Heart right ventricle (tissue), 16 donors: ENCODE measurements at regions of chr2 and their contacts with region 1.

Region 1: GRCh38 chr2:118882709-118883210 is 35.3 kb upstream of the EN1 start:
- DNase-seq: peak; percentile 28 to 40
- ATAC-seq: peak; percentile 51 to 92 (median 78)
- H3K4me3 ChIP-seq: peak overlapping the region in 4 of 10 donors; percentile 17 to 37 (median 29)
- H3K27ac ChIP-seq: no peak overlapping the region
- H3K4me1 ChIP-seq: peaks cover 0 to 15% (median 0%) of the 10 kb centered on the region in 9 donors
- H3K27me3 ChIP-seq: peaks cover 0 to 52% (median 45%) of the 10 kb centered on the region in 7 donors
- CTCF ChIP-seq: peak; percentile 49 to 93 (median 80)

Region 2: DNA sequence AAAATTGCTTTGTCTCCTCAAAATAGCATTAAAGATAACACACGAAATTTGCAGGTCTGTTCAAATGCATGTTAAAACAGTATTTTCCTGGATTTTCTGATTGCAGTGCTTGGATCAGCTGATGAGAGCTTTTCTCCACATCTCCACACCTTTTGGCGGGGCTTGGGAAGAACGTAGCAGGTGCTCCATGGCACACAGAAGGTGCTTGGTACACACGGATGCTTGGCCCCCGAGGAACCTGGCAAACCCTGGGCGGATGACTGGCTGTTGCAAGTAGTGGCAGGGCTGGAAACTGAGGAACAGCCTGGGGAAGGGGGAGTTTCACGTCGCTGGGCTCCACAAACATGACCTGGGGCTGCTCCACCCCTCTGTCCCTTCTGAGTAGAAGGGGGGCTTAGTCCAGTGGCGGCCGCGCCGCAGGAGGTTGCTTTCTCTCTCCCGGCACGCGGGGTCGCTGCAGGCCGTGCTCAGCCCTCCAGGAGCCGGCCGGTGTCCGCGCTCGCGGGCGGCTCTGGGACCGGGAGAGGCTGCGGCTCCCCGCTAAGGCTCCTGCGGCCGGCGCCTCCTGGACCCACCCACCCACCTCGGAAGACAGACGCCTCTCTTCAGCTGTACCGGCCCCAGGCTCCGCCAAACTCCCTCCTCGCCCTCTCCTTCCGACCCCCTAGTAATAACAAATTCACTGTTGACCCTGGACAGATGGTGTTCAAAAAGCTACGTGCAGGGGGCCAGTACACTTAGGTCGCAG is 128.6 kb after region 1 on chr2:
- intact Hi-C with region 1: loop called in 1 of 10 experiments (anchors 5 kb)
- DNase-seq: peak; percentile 22 to 65
- ATAC-seq: peak; percentile 79 to 95 (median 92)
- H3K4me3 ChIP-seq: peak overlapping the region in 2 of 10 donors; percentile 15 to 20
- H3K27ac ChIP-seq: no peak overlapping the region
- H3K4me1 ChIP-seq: peaks cover 0 to 7% (median 0%) of the 10 kb centered on the region in 9 donors
- H3K27me3 ChIP-seq: peaks cover 0 to 48% (median 34%) of the 10 kb centered on the region in 7 donors
- CTCF ChIP-seq: peak; percentile 21 to 77 (median 65)

Region 3: DNA sequence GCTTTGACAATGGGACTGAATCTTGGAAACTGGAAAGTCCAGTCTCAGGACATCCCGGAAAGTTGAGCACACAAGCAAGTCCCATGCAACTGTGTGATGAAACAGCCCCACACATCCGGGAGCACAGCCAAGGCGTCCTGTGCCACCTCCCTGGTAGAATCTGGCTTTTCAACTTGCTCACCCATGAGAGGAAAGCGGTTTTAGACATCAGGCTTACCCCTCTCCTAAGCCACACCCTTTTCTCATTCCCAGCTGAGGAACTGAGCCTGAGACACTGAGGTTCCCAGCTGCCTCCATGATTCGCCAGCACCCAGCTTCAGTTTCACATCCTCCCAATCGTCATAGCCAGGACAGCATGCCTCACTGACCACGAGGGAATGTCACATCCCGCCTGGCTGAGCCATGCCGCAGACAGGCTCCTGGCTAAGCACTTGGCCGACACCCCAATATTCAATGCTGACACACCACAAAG is 401.1 kb after region 1 on chr2:
- intact Hi-C with region 1: loop called in 2 of 10 experiments (anchors 10 kb)
- DNase-seq: peak; percentile 46 to 60
- ATAC-seq: peak; percentile 77 to 91 (median 84)
- H3K4me3 ChIP-seq: no peak overlapping the region
- H3K27ac ChIP-seq: peak overlapping the region in 6 of 10 donors; percentile 9 to 80 (median 23)
- H3K4me1 ChIP-seq: peaks cover 0 to 28% (median 3%) of the 10 kb centered on the region in 9 donors
- H3K27me3 ChIP-seq: no peaks in the 10 kb centered on the region
- CTCF ChIP-seq: no peak

Region 4: GRCh38 chr2:119311356-119311755 is 428.6 kb after region 1 on chr2:
- intact Hi-C with region 1: loop called in 1 of 10 experiments (anchors 5 kb)
- DNase-seq: no peak
- ATAC-seq: peak in 1 of 8 donors; percentile 6
- H3K4me3 ChIP-seq: no peak overlapping the region
- H3K27ac ChIP-seq: no peak overlapping the region
- H3K4me1 ChIP-seq: peaks cover 0 to 34% (median 16%) of the 10 kb centered on the region in 9 donors
- H3K27me3 ChIP-seq: no peaks in the 10 kb centered on the region
- CTCF ChIP-seq: no peak

Region 5: DNA sequence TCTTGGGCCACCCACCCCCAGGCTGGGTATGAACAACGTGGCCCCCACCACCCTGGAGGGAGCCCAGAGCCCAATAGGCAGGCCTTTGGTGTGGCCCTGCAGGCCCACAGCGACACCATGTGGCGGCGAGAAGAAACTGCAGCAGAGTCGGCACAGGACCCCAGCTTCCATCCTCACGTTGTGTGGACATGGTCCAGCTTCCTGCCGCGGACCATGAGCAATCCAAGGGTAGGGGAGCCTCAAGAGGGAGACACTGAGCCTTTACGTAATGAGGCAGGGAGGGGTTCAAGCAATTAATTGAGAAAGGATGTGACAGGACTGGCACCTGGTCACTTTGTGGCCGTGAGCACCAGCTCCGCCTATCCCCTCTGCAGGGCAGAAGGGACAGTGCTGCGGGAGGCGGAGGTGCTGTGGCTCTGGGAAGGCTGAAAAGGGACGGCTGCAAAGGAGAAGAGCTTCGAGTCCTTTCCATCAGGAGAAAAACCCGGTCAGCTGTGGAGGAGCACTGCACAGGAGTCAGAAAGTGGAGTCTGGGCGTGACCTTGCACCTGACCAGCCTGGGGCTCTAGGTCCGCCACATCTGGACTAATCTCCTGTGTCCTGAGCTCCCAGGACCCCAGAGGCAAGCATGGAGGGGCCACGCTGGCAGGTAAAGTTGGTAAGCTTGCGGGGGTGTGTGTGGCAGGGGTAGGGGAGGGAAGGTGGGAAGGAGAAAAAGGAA is 593.7 kb after region 1 on chr2:
- intact Hi-C with region 1: loop called in 5 of 10 experiments (anchors 5 to 10 kb)
- DNase-seq: peak in 1 of 2 donors; percentile 52
- ATAC-seq: peak; percentile 57 to 78 (median 72)
- H3K4me3 ChIP-seq: peak overlapping the region in 2 of 10 donors; percentile 20
- H3K27ac ChIP-seq: peak overlapping the region in 5 of 10 donors; percentile 28 to 73 (median 44)
- H3K4me1 ChIP-seq: peaks cover 0 to 39% (median 18%) of the 10 kb centered on the region in 9 donors
- H3K27me3 ChIP-seq: peaks cover 0 to 6% (median 0%) of the 10 kb centered on the region in 7 donors
- CTCF ChIP-seq: peak; percentile 89 to 98 (median 96)